ENCODE measurements at regions of chr11 and their contacts with region 1.

Region 1: GRCh38 chr11:69211920-69212571 is 56.3 kb downstream of the SMIM38 start:
- DNase-seq: no peak
- H3K4me3 ChIP-seq: no peak overlapping the region
- H3K27ac ChIP-seq: no peak overlapping the region
- H3K27me3 ChIP-seq: peaks cover 0 to 64% (median 0%) of the 10 kb centered on the region in 45 donors
- CTCF ChIP-seq: peak in 36 of 56 donors; percentile 5 to 46 (median 21)

Region 2: GRCh38 chr11:68889948-68890446 is 322.0 kb before region 1 on chr11:
- intact Hi-C with region 1: no loop called
- DNase-seq: no peak
- H3K4me3 ChIP-seq: no peak overlapping the region
- H3K27ac ChIP-seq: peak overlapping the region in 43 of 59 donors; percentile 7 to 90 (median 74)
- H3K27me3 ChIP-seq: no peaks in the 10 kb centered on the region
- CTCF ChIP-seq: peak in 25 of 56 donors; percentile 9 to 39 (median 21)

Region 3: GRCh38 chr11:68928136-68928880 is 283.7 kb before region 1 on chr11:
- intact Hi-C with region 1: no loop called
- DNase-seq: no peak
- H3K4me3 ChIP-seq: no peak overlapping the region
- H3K27ac ChIP-seq: no peak overlapping the region
- H3K27me3 ChIP-seq: no peaks in the 10 kb centered on the region
- CTCF ChIP-seq: no peak

Region 4: DNA sequence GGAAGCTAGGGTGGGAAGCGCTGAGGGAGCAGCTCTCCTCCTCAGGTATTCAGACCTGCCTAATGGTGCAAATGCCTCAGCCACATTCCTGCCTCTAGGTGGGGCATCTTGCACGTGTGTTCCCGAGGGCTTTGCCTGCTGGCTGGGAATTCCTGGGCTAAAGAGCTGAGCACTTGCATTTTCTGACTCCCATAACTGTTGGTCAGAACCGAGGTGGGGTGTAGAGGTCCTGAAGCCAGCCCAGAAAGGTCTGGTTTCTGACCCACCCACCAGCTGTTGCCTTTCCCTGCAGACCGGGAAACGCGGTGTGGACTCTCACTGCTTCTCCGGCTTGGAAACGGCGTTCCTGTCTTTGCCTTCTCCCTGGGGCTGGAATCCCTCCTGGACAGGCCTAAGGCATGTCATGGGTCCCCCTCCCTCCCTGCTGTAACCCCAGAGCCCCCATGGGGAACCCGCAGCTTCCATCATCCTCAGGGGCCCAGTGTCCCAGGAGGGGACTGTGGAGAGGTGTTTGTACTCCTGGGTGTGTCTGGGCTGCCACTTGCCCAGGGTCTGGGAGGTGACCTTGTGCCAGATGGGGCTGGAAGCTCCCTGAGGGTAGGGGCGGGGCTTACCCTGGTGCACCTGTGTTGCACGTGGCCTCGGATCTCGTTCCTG is 80.3 kb before region 1 on chr11:
- intact Hi-C with region 1: loop called in 1 of 2 experiments (anchors 5 kb)
- DNase-seq: peak in 8 of 10 donors; percentile 23 to 70 (median 44)
- H3K4me3 ChIP-seq: no peak overlapping the region
- H3K27ac ChIP-seq: no peak overlapping the region
- H3K27me3 ChIP-seq: peaks cover 0 to 4% (median 0%) of the 10 kb centered on the region in 45 donors
- CTCF ChIP-seq: peak; percentile 45 to 86 (median 74)

Region 5: DNA sequence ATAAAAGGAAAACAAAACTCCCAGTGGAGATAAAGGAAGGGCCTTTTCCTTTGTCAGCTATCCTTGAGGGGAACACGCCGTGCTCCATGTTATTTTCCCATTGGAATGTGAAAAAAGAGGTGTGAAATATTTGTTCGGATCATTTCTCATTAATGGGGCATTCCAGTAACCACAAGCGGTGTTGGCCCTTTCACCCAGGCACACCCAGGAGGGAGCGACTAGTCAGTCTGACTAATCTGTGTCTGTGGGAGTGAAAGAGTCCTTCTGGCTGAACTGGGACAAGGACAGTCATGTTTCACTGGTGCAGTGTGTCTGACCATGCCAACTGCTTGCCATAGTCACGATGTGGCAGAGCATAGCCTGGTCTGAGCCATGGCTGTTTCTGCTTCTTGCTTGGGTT is 68.9 kb after region 1 on chr11:
- intact Hi-C with region 1: no loop called
- DNase-seq: no peak
- H3K4me3 ChIP-seq: no peak overlapping the region
- H3K27ac ChIP-seq: no peak overlapping the region
- H3K27me3 ChIP-seq: peaks cover 0 to 8% (median 0%) of the 10 kb centered on the region in 45 donors
- CTCF ChIP-seq: no peak

Region 6: GRCh38 chr11:69746752-69747742 is 535.0 kb after region 1 on chr11:
- intact Hi-C with region 1: no loop called
- DNase-seq: no peak
- H3K4me3 ChIP-seq: no peak overlapping the region
- H3K27ac ChIP-seq: no peak overlapping the region
- H3K27me3 ChIP-seq: peaks cover 0 to 16% (median 0%) of the 10 kb centered on the region in 45 donors
- CTCF ChIP-seq: no peak